ENCODE measurements at regions of chr1 and their contacts with region 1.

Region 1: GRCh38 chr1:103561643-103562395 is 9.6 kb upstream of the AMY2B start:
- DNase-seq: no peak
- H3K4me3 ChIP-seq: no peak overlapping the region
- H3K27ac ChIP-seq: no peak overlapping the region
- H3K4me1 ChIP-seq: peaks cover 6% of the 10 kb centered on the region
- CTCF ChIP-seq: no peak

Region 2: GRCh38 chr1:103576065-103576464 is 14.2 kb after region 1 on chr1:
- CTCF ChIA-PET with region 1: no interaction called
- POLR2A ChIA-PET with region 1: interaction called, 11 read pairs
- intact Hi-C with region 1: no loop called
- DNase-seq: no peak
- H3K4me3 ChIP-seq: no peak overlapping the region
- H3K27ac ChIP-seq: no peak overlapping the region
- H3K4me1 ChIP-seq: no peaks in the 10 kb centered on the region
- CTCF ChIP-seq: no peak

Measured in OCI-LY7 (cell line).